AG04450 (cell line): ENCODE measurements at regions of chr10 and their contacts with region 1.

Region 1: GRCh38 chr10:33008499-33009243 is 50.6 kb upstream of the ITGB1 start:
- DNase-seq: peak; percentile 81
- H3K4me3 ChIP-seq: no peak overlapping the region
- H3K27ac ChIP-seq: no peak overlapping the region
- H3K27me3 ChIP-seq: no peaks in the 10 kb centered on the region
- CTCF ChIP-seq: peak; percentile 100

Region 2: GRCh38 chr10:32795598-32796183 is 213.0 kb before region 1 on chr10:
- CTCF ChIA-PET with region 1: interaction called, 21 read pairs
- POLR2A ChIA-PET with region 1: no interaction called
- DNase-seq: no peak
- H3K4me3 ChIP-seq: no peak overlapping the region
- H3K27ac ChIP-seq: no peak overlapping the region
- H3K27me3 ChIP-seq: no peaks in the 10 kb centered on the region
- CTCF ChIP-seq: peak; percentile 73

Region 3: DNA sequence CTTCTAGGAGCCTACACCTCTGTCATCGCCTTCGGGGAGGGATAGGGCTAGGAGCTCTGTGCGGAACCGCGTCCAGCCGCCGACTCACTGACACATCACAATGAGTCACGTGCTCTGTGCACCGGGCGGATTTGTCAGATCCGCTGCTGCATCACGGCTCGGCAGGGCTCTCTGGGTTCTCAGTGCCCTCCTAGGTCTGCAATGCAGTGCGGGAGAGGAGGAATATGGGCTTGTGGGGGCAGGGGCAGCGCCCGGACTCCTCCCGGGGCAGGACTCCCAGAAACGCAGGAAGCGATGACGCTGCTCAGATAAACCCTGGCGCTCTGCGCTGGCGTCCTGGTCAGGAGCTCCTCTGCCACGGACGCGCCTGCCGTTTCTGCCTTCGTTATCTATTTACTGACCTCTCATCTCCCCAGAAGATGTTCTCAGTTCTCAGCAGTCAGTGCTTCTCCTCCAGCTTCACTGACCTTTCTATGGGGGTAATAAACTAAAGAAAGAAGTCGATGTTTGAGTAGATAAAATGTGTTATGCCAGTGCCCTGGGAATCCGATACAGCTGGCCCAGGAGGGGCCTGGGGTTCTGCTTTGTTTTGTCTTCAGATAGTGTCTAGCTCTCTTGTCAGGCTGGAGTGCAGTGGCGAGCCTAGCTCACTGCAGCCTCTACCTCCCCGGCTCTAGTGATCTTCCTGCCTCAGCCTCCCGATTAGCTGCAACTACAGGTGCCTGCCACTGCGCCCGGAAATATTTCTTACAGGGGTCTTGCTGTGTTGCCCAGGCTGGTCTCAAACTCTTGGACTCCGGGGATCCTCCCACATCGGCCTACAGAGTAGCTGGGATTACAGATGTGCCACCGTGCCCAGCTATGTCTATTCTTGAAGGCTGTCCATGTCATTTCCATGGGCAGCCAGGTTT is 27.9 kb before region 1 on chr10:
- CTCF ChIA-PET with region 1: interaction called, 5 read pairs
- POLR2A ChIA-PET with region 1: interaction called, 17 read pairs
- DNase-seq: peak; percentile 97
- H3K4me3 ChIP-seq: peak overlapping the region; percentile 51
- H3K27ac ChIP-seq: peak overlapping the region; percentile 99
- H3K27me3 ChIP-seq: no peaks in the 10 kb centered on the region
- CTCF ChIP-seq: 0 out of 2 replicates have a peak, but pooled peaks have one; percentile 8

Region 4: GRCh38 chr10:33022090-33022489 is 13.4 kb after region 1 on chr10:
- CTCF ChIA-PET with region 1: interaction called, 11 read pairs
- POLR2A ChIA-PET with region 1: no interaction called
- DNase-seq: no peak
- H3K4me3 ChIP-seq: no peak overlapping the region
- H3K27ac ChIP-seq: no peak overlapping the region
- H3K27me3 ChIP-seq: no peaks in the 10 kb centered on the region
- CTCF ChIP-seq: no peak

Region 5: GRCh38 chr10:33153968-33154327 is 145.3 kb after region 1 on chr10:
- CTCF ChIA-PET with region 1: interaction called, 13 read pairs
- POLR2A ChIA-PET with region 1: no interaction called
- DNase-seq: no peak
- H3K4me3 ChIP-seq: no peak overlapping the region
- H3K27ac ChIP-seq: no peak overlapping the region
- H3K27me3 ChIP-seq: no peaks in the 10 kb centered on the region
- CTCF ChIP-seq: no peak

Region 6: DNA sequence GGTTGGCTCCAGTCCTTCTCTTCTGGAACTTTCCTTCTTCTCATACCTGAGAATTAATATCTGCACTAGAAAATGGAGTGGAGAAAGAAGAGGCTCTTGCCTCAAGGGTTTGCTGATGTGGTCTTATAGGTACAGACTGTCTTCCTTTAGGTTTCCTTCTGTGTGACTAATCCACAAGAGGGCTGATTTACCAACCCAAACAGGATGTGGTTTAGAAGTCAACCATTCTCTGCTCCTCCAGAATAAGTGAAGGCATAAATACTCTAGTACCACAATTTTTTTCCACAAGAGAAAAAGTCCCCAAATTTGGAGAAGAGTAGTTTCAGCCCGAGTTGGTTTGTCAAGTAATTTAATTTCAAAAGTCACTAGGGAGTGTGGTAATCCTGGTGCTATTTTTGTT is 240.0 kb after region 1 on chr10:
- CTCF ChIA-PET with region 1: no interaction called
- POLR2A ChIA-PET with region 1: interaction called, 13 read pairs
- DNase-seq: peak; percentile 74
- H3K4me3 ChIP-seq: no peak overlapping the region
- H3K27ac ChIP-seq: no peak overlapping the region
- H3K27me3 ChIP-seq: no peaks in the 10 kb centered on the region
- CTCF ChIP-seq: no peak